Heart right ventricle (tissue), 16 donors: ENCODE measurements at regions of chr9 and their contacts with region 1.

Region 1: DNA sequence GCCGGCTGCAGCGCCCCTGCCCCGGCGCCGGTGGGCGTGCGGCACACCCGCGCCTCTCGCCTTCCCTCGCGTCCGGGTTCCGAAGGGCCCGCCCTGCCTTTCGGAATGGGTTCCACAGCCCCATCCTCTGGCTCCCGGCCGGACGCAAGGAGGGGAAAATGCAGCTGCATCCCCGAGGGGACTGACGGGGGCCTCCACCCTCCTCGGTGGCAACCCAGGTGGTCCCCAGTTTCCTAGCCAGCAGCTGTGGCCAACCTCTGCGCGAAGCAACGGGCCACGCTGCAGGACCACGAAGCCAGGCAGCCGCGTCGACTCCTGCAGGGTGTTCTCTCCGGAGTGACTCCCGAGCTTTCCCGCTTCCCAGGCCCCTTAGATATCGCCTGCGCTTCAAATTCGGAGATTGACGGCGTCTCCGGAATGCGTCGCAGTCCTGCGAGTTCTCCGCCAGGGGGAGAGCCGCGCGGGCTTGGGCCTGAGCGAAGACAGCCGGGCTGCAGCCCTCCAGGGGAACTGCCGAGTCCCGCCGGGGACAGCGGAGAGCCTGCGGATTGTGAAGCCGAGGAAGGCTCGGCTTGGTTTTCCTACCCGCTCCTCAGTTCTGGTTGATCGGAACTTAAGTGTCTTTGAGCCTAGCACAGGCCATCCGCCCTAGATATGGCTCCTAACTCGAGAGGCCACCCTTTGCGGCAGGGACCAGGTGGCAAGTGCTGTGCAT is 582 bp upstream of the APBA1 start:
- DNase-seq: peak; percentile 81 to 87
- ATAC-seq: peak; percentile 87 to 95 (median 93)
- H3K4me3 ChIP-seq: peak overlapping the region; percentile 48 to 89 (median 80)
- H3K27ac ChIP-seq: peak overlapping the region; percentile 7 to 91 (median 78)
- H3K4me1 ChIP-seq: peaks cover 5 to 30% (median 14%) of the 10 kb centered on the region in 9 donors
- H3K27me3 ChIP-seq: peaks cover 0 to 16% (median 0%) of the 10 kb centered on the region in 7 donors
- CTCF ChIP-seq: peak; percentile 72 to 95 (median 90)

Region 2: DNA sequence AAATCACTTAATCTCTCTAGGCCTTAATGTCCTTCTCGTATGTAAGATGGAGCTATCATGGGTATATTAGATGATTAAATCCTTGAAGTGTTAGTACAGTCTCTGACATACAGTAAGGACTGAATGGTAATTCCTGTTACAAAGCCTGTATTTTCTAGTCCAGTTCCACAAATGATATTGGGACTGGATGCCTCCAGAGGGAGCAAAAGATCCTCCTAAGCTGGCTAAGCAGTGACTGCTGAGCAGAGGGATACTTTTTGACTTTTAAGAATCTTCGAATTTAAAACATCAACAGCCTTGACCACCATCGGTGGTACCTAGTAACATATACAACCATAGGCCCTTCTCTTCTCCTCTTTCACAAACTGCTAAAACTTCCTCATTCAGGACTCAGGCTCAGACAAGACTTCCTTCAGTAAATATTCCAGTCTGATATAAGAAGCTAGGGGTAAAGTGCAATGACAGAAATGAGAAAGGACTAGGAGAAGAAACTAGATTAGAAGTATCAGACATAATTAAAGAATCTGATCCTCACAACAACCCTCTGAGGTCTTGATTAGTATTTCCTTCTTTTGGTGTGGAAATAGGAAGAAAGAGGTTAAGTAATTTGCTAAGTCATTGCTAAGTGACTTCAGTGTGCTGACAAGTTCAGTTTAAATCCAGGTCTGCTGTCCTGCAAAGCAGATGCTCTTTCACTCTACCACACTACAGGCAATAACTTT is 73.1 kb after region 1 on chr9:
- intact Hi-C with region 1: loop called in 1 of 10 experiments (anchors 10 kb)
- DNase-seq: no peak
- ATAC-seq: peak in 3 of 8 donors; percentile 17 to 44 (median 27)
- H3K4me3 ChIP-seq: no peak overlapping the region
- H3K27ac ChIP-seq: peak overlapping the region in 1 of 10 donors; percentile 67
- H3K4me1 ChIP-seq: peaks cover 0 to 32% (median 22%) of the 10 kb centered on the region in 9 donors
- H3K27me3 ChIP-seq: no peaks in the 10 kb centered on the region
- CTCF ChIP-seq: peak in 6 of 9 donors; percentile 14 to 33 (median 26)

Region 3: DNA sequence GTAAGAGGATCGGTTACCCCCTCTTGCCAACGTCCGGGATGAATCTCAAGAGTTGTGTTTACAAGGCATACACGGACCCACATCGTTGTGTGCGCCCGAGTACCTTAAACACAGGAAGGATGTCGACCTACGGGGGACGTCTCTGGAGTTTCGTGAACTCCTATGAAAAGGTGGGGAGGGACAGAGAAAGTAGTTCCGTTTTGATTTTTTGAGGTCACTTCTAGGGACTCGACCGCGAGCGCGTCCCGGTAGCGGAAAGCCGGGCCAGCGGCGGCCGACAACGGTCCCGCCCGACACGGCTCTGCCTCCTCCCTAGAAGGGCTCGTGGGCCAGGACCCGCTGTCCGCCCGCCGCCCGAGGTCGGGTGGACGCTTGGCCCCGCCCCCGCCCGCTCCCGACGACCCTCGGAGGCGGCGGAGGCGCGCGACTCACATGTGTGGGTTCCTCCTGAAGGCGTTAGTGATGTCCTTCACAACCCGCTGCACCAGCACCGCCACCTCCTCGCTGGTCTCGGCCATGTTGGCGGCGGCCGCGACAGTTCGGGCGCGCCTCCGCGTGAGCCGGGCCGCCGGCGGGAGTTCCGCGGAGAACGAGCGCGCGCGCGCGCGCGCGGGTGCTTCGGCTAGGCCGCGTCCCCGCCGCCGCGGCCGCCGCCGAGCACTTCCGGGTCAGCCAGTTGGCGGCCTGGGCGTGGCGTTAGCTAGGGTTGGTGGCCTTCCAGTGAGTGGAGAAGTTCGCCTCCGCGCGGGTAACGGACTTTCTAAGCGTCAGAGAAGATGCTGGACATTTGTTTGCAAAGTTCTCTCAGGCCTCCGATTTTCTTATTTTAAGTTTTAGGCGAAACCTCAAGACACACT is 86.9 kb after region 1 on chr9 and contains the start of gene PTAR1:
- intact Hi-C with region 1: loop called in 6 of 10 experiments (anchors 1 to 5 kb)
- DNase-seq: peak; percentile 90 to 92
- ATAC-seq: peak; percentile 97 to 98 (median 97)
- H3K4me3 ChIP-seq: peak within 1 kb of the TSS; percentile 72 to 97 (median 84)
- H3K27ac ChIP-seq: peak within 1 kb of the TSS; percentile 86 to 99 (median 98)
- H3K4me1 ChIP-seq: peaks cover 0 to 45% (median 25%) of the 10 kb centered on the region in 9 donors
- H3K27me3 ChIP-seq: no peaks in the 10 kb centered on the region
- CTCF ChIP-seq: no peak
- total RNA-seq, gene PTAR1: 21.8 to 30.2 (median 24.3) TPM

Region 4: DNA sequence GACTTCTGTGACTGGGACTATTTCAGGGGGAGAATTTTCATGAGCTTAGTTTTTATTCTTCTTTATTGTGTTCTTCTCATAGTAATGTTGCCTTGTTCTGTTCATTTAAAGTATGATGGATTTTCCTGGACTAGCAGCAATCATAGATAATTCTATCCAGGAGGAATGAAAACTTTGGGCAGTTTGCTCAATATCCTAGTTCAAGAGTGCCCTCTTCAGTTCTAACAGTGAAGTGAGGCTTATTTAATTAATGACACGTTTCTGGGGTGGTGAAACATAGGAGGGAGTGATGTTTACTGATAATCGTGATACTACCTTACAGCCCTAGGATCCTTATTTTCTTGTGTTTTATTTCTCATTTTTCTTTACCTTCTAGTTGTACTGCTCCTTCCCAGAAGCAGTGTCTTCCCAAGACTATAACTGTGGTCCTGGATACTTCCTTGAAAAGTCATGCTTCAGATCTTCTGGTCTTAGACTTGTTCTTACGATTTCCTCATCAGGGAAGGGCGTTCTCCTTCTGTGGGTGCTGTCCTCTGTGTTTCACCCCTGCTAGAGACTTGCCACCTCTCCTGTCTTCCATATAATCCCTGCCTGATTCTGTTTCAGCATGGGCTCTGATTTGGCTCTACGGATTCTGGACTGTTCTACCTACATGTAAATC is 205.2 kb after region 1 on chr9:
- intact Hi-C with region 1: loop called in 7 of 10 experiments (anchors 5 to 10 kb)
- DNase-seq: no peak
- ATAC-seq: peak in 6 of 8 donors; percentile 38 to 74 (median 54)
- H3K4me3 ChIP-seq: no peak overlapping the region
- H3K27ac ChIP-seq: no peak overlapping the region
- H3K4me1 ChIP-seq: peaks cover 0 to 19% (median 5%) of the 10 kb centered on the region in 9 donors
- H3K27me3 ChIP-seq: no peaks in the 10 kb centered on the region
- CTCF ChIP-seq: peak; percentile 13 to 70 (median 59)

Region 5: DNA sequence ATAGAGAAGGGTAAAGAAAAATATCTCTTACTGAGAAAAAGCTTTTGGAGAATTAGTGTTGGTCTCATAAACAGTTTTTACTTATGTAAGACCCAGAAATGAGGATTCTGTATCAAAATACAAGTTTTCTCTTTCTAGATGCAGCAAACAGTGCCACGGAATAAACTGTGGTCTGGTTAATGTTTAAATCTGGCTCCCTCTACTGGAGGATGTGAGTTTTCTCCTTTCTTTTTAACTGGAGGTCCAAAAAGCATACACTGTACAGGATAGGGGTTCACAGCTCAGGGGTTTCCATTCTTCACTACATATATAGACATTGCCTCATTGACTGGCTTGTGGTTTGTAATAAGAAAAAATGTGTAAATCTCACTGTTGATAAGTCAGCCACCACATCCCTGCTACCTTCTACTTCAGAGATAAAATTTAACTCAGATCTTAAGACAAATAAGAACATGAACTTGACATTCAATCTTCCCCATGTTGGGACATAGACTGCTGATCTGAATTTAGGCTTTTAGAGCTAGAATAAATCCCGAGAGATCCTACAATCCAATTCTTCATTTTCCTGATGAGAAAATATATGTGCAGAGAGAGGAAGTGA is 246.8 kb after region 1 on chr9:
- intact Hi-C with region 1: loop called in 1 of 10 experiments (anchors 5 kb)
- DNase-seq: peak in 1 of 2 donors; percentile 14
- ATAC-seq: peak in 7 of 8 donors; percentile 63 to 82 (median 68)
- H3K4me3 ChIP-seq: no peak overlapping the region
- H3K27ac ChIP-seq: no peak overlapping the region
- H3K4me1 ChIP-seq: peaks cover 0 to 3% (median 0%) of the 10 kb centered on the region in 9 donors
- H3K27me3 ChIP-seq: peaks cover 0 to 26% (median 6%) of the 10 kb centered on the region in 7 donors
- CTCF ChIP-seq: peak; percentile 41 to 79 (median 72)